ENCODE measurements at regions of chr1 and their contacts with region 1.

Region 1: GRCh38 chr1:160830321-160831153 is 32.1 kb downstream of the CD244 start:
- DNase-seq: peak; percentile 80
- H3K4me3 ChIP-seq: no peak overlapping the region
- H3K27ac ChIP-seq: no peak overlapping the region
- H3K4me1 ChIP-seq: no peaks in the 10 kb centered on the region
- CTCF ChIP-seq: peak; percentile 92

Region 2: DNA sequence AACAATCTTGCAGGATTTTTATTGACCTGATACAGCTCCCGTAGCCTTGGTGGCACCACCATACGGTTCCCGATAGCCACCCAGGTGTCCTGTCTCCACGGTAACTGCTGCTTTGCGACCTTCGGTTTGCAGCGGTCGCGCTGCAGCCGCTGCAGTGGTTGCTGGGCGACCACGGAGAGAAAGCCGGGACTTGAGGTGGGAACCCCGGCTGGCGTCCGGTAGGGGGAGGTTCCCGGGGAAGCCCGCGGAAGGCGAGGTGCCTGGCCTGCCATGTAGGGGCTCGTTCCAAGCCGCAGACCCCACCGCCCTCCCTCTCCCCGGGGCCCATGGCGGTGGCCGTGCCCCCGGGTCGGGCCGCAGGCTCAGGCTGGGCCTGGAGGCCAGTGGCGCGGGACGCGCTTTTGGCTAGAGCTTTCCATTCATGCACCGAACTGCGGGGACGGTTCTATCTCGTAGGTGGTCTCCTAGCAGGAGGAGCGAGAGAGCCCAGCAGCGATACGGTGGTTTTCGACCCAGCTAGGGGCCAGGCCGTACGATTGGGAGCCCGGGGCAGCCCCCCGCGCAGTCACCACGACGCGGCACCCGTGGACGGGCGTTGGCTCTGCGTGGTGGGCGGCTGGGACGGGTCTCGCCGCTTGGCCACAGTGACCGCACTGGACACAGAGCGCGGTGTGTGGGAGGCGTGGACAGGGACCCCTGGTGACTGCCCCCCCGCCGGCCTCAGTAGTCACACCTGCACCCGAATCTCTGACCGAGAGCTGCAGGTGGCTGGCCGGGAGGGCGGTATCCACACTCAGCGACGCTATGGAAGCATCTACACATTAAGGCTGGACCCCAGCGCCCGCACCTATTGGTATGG is 267.9 kb after region 1 on chr1 and contains the start of gene KLHDC9:
- CTCF ChIA-PET with region 1: no interaction called
- POLR2A ChIA-PET with region 1: no interaction called
- intact Hi-C with region 1: loop called (anchors 10 kb)
- DNase-seq: peak; percentile 86
- H3K4me3 ChIP-seq: peak within 1 kb of the TSS; percentile 65
- H3K27ac ChIP-seq: peak within 1 kb of the TSS; percentile 50
- H3K4me1 ChIP-seq: peaks cover 29% of the 10 kb centered on the region
- CTCF ChIP-seq: no peak
- total RNA-seq, gene KLHDC9: 0.95 and 2.7 TPM in 2 replicates